ENCODE measurements at regions of chr4 and their contacts with region 1.

Region 1: GRCh38 chr4:153153339-153153871 is 50.8 kb upstream of the TRIM2 start:
- DNase-seq: peak; percentile 76 to 90 (median 81)
- H3K4me3 ChIP-seq: peak overlapping the region; percentile 7 to 75
- H3K4me3 Mint-ChIP-seq: peak overlapping the region; percentile 89 to 96 (median 91)
- H3K27ac ChIP-seq: peak overlapping the region; percentile 67
- H3K27ac Mint-ChIP-seq: peak overlapping the region; percentile 85 to 95 (median 93)
- H3K4me1 ChIP-seq: peaks cover 30% of the 10 kb centered on the region
- H3K4me1 Mint-ChIP-seq: peaks cover 14 to 47% (median 29%) of the 10 kb centered on the region in 4 donors
- H3K27me3 ChIP-seq: no peaks in the 10 kb centered on the region
- H3K27me3 Mint-ChIP-seq: no peaks in the 10 kb centered on the region

Region 2: DNA sequence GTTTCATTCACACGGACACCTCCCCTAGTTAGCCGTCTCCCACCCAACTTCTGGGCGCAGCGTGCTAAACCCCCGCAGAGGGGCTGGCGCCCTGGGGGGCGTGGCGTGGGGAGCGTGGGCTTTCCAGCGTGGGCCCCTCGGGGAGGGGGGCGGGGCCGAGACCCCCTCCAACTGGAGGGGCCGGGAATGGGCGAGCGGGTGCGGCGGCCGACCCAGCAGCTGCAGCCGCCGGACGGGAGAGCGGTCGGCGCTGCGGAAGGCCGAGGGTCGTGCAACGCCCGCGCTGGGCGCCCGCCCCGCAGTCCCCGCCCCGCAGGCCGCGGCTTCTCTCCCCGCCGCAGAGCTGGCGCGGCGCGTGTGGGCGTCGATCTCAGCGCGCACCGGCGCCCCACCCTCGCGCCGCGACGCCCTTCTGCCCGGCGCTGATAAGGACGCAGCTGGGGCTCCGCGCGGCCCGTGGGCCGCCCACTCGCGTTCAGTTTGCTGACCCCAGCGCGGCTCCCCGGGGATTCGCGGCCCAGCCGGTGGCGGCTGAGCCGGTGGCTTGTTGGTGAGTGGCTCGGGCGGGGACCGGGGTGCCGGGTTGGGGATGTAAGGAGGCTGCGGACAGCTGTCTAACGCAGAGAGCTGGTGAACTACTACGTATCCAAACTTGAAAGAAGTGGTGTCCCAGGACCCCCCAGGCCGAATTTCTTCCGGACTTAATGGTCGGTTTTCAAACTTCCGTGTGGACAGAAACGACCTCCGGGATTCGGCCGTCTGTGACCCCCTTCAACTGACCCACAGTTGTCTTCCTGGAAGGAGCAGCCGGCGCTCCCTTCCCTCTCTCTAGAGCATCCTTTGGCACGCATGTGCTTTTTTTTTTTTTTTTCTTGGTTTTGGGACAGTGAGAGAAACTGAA is 215.8 kb before region 1 on chr4:
- CTCF ChIA-PET with region 1: no interaction called
- POLR2A ChIA-PET with region 1: no interaction called
- intact Hi-C with region 1: no loop called
- DNase-seq: peak in 2 of 5 donors; percentile 14 to 20
- H3K4me3 ChIP-seq: peak overlapping the region; percentile 36 to 54
- H3K4me3 Mint-ChIP-seq: peak overlapping the region; percentile 77 to 87 (median 84)
- H3K27ac ChIP-seq: no peak overlapping the region
- H3K27ac Mint-ChIP-seq: no peak overlapping the region
- H3K4me1 ChIP-seq: peaks cover 20% of the 10 kb centered on the region
- H3K4me1 Mint-ChIP-seq: peaks cover 13 to 30% (median 21%) of the 10 kb centered on the region in 4 donors
- H3K27me3 ChIP-seq: peaks cover 32% of the 10 kb centered on the region
- H3K27me3 Mint-ChIP-seq: peaks cover 50 to 54% of the 10 kb centered on the region in 2 donors

Region 3: DNA sequence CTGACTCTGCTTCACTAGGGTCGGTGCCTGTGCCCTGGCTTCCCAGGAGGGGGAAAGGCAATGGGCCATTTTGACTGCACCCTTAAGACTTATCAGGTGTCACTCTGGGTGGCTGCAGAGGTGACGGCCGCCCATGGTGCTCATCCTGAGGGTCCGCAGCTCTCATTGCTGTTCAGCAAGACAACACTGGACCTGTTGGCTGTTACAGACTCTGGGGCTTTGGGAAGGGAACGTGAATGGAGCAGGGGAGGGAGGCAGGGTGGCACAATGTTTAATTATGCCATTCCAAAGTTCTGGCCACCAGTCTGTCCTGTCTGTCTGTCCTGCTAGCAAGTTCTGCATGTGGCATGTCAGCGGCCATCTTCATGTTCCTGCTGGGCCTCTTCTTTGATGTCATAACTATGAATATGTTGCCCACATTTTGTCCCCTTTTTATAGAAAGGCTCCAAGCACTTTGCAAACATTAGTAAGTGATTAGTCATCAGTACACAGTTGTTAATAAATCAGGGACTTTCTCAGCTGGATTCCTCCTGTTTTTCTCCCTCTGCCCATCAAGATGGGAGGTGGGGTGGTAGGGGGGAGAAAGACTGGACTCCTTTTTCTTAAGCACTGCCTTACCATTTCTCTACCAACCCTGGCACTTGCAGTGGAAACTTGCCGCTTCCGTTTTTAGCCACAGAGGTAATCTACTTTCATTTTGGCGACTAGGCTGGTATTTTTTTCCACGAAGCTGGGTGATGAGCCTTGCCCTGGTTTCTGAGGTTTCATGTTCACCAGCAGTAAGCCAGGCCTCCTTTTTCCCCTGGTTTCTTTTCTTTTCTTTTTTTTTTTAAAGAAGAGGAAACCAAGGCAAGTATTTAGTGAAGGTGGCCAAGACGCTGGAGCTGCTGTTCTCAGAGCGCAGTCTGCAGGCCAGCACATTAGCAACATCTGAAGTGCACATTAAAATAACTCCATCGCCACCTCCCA is 37.8 kb before region 1 on chr4:
- CTCF ChIA-PET with region 1: no interaction called
- POLR2A ChIA-PET with region 1: interaction called, 4 read pairs
- intact Hi-C with region 1: loop called (anchors 2 kb)
- DNase-seq: peak; percentile 85 to 92 (median 89)
- H3K4me3 ChIP-seq: peak overlapping the region in 1 of 2 donors; percentile 37
- H3K4me3 Mint-ChIP-seq: peak overlapping the region in 1 of 8 donors; percentile 74
- H3K27ac ChIP-seq: peak overlapping the region; percentile 68
- H3K27ac Mint-ChIP-seq: no peak overlapping the region
- H3K4me1 ChIP-seq: peaks cover 62% of the 10 kb centered on the region
- H3K4me1 Mint-ChIP-seq: peaks cover 0 to 18% (median 9%) of the 10 kb centered on the region in 4 donors
- H3K27me3 ChIP-seq: no peaks in the 10 kb centered on the region
- H3K27me3 Mint-ChIP-seq: no peaks in the 10 kb centered on the region

Region 4: GRCh38 chr4:153142700-153143438 is 10.5 kb before region 1 on chr4:
- CTCF ChIA-PET with region 1: interaction called, 26 read pairs
- POLR2A ChIA-PET with region 1: interaction called, 3 read pairs
- intact Hi-C with region 1: loop called (anchors 1 kb)
- DNase-seq: peak; percentile 63 to 68 (median 64)
- H3K4me3 ChIP-seq: no peak overlapping the region
- H3K4me3 Mint-ChIP-seq: no peak overlapping the region
- H3K27ac ChIP-seq: no peak overlapping the region
- H3K27ac Mint-ChIP-seq: no peak overlapping the region
- H3K4me1 ChIP-seq: peaks cover 4% of the 10 kb centered on the region
- H3K4me1 Mint-ChIP-seq: peaks cover 0 to 12% (median 5%) of the 10 kb centered on the region in 4 donors
- H3K27me3 ChIP-seq: no peaks in the 10 kb centered on the region
- H3K27me3 Mint-ChIP-seq: no peaks in the 10 kb centered on the region

Region 5: DNA sequence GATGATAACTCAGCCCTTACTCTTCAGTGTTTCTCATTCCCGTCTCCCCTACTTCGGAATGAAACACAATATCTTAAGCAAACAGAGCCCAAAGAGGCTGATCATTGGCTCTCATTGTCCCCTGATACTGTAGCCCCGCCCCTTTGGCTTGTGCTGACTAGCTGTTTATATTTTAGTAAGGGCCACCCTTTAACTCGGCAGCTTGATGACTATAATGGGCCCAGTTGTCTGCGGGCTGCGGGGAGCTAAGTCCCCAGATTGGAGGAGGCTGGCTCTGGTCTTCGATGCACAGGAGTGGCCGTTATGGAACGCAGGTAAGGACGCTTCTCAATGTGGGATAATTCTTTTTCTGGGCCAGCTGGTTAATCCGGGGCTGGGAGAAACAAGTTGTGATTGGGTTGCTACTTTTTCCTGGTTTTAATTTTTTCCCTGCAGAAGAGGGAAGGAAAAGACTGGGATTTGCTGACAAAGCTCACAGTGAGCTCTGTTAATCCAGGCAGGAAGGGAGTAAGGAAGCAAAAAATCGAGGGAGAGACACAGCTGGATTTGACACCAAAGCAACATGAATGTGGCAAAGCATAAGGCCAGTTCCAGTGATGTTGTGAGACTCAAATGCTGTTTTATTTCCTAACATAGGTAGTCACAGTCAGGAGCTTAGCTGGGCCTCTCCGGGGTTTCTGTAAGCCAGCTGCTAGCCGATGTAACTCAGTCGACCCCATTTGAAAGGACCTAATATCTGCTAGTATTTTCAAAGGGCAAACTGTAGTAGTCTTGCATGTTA is 51.0 kb after region 1 on chr4 and contains the start of gene TRIM2:
- CTCF ChIA-PET with region 1: interaction called, 4 read pairs
- POLR2A ChIA-PET with region 1: interaction called, 3 read pairs
- intact Hi-C with region 1: loop called (anchors 2 kb)
- DNase-seq: no peak
- H3K4me3 ChIP-seq: peak within 1 kb of the TSS in 1 of 2 donors; percentile 39
- H3K4me3 Mint-ChIP-seq: peak within 1 kb of the TSS; percentile 73 to 87 (median 82)
- H3K27ac ChIP-seq: peak within 1 kb of the TSS; percentile 37
- H3K27ac Mint-ChIP-seq: peak within 1 kb of the TSS; percentile 68 to 94 (median 89)
- H3K4me1 ChIP-seq: peaks cover 41% of the 10 kb centered on the region
- H3K4me1 Mint-ChIP-seq: peaks cover 23 to 48% (median 37%) of the 10 kb centered on the region in 4 donors
- H3K27me3 ChIP-seq: no peaks in the 10 kb centered on the region
- H3K27me3 Mint-ChIP-seq: no peaks in the 10 kb centered on the region
- total RNA-seq, gene TRIM2: 11.9 to 12.3 TPM

Region 6: GRCh38 chr4:153249199-153250041 is 96.0 kb after region 1 on chr4:
- CTCF ChIA-PET with region 1: no interaction called
- POLR2A ChIA-PET with region 1: interaction called, 3 read pairs
- intact Hi-C with region 1: loop called (anchors 1 kb)
- DNase-seq: peak; percentile 86 to 90 (median 87)
- H3K4me3 ChIP-seq: peak overlapping the region; percentile 63 to 64
- H3K4me3 Mint-ChIP-seq: peak overlapping the region; percentile 89 to 95 (median 94)
- H3K27ac ChIP-seq: peak overlapping the region; percentile 73
- H3K27ac Mint-ChIP-seq: peak overlapping the region; percentile 89 to 97 (median 97)
- H3K4me1 ChIP-seq: peaks cover 17% of the 10 kb centered on the region
- H3K4me1 Mint-ChIP-seq: peaks cover 17 to 43% (median 31%) of the 10 kb centered on the region in 4 donors
- H3K27me3 ChIP-seq: no peaks in the 10 kb centered on the region
- H3K27me3 Mint-ChIP-seq: peaks cover 0 to 2% of the 10 kb centered on the region in 2 donors

Region 7: DNA sequence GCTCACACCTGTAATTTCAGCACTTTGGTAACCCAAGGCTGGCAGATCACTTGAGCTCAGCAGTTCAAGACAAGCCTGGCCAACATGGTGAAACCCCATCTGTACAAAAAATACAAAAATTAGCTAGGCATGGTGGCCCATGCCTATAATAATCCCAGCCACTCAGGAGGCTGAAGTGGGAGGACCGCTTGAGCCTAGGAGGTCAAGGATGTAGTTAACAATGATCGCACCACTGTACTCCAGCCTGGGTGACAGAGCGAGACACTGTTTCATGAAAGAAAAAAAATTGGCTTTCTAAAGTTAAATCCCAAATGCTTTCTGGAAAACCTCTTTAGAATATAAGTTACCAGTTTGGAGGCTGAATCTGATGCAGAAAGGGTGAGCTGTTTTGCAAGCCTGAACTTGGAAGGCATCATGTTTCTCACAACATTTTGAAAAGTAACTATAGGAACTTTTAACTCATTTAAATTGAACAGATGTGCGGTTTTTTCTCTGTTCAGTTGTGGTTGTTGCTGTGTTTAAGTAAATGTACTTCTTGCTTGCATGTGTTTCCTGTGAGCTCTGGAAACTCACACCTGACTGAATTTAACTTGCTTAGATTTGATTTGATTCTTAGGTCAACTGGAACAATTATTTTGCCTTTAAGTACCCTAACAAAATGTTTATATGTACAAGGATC is 272.9 kb after region 1 on chr4:
- CTCF ChIA-PET with region 1: no interaction called
- POLR2A ChIA-PET with region 1: no interaction called
- intact Hi-C with region 1: loop called (anchors 5 kb)
- DNase-seq: peak; percentile 52 to 72 (median 65)
- H3K4me3 ChIP-seq: no peak overlapping the region
- H3K4me3 Mint-ChIP-seq: peak overlapping the region in 7 of 8 donors; percentile 13 to 74 (median 65)
- H3K27ac ChIP-seq: no peak overlapping the region
- H3K27ac Mint-ChIP-seq: peak overlapping the region; percentile 83 to 94 (median 90)
- H3K4me1 ChIP-seq: peaks cover 64% of the 10 kb centered on the region
- H3K4me1 Mint-ChIP-seq: peaks cover 29 to 51% (median 41%) of the 10 kb centered on the region in 4 donors
- H3K27me3 ChIP-seq: no peaks in the 10 kb centered on the region
- H3K27me3 Mint-ChIP-seq: no peaks in the 10 kb centered on the region